HCT116 (cell line): ENCODE measurements at regions of chr16 and their contacts with region 1.

Region 1: GRCh38 chr16:20383106-20384029 is 21.2 kb downstream of the PDILT start:
- DNase-seq: peak; percentile 71
- ATAC-seq: peak; percentile 92
- H3K4me3 ChIP-seq: no peak overlapping the region
- H3K27ac ChIP-seq: no peak overlapping the region
- H3K4me1 ChIP-seq: no peaks in the 10 kb centered on the region
- H3K27me3 ChIP-seq: peaks cover under 1% of the 10 kb centered on the region; the same call in 1 of the 2 replicates
- CTCF ChIP-seq: peak; percentile 69 to 83 (median 76)
- POLR2A ChIP-seq: no peak
- RAD21 ChIP-seq: peak; percentile 81

Region 2: DNA sequence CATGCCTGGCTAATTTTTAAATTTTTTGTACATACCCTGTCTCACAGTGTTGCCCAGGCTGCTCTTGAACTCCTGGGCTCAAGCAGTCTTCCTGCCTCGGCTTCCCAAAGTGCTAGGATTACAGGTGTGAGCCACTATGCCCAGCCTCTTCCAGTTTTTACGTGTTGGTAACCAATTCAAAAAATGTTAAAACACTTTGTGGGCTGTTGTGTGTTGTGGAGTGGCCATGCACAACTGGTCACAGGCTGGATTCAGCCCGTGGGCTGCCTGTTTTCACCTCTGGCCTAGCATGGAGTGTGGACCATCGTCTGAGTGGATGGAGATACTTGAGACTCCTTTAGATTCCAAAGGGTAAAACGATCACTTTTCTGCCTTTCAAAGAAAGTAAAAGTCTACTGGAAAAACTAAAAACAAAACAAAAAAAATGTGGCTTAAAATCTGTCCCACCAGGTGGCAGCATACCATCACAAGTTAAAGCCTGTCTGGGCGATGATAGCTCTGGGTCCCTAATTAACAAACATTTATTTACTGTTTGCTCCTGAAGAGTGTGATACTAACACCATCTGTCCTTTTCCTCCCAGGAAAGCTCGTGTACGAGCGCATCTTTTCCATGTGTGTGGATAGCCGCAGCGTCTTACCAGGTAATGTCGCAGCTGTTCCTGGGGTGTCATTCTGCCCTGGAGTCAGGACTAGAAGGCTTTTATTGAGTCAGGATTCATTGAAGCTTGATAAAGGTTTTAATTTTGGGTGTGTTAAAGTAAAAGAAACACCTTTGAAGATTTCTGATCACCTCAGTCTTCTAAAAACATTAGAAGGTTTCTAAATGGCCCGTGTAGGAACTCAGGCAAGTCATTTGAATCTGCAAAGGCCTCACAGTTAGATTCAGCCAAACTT is 782.0 kb before region 1 on chr16:
- CTCF ChIA-PET with region 1: interaction called, 14 read pairs
- POLR2A ChIA-PET with region 1: no interaction called
- RAD21 ChIA-PET with region 1: interaction called in 1 of 2 experiments, 3 read pairs
- intact Hi-C with region 1: loop called (anchors 5 kb)
- DNase-seq: peak; percentile 36
- ATAC-seq: peak; percentile 67
- H3K4me3 ChIP-seq: no peak overlapping the region
- H3K27ac ChIP-seq: no peak overlapping the region
- H3K4me1 ChIP-seq: no peaks in the 10 kb centered on the region; a peak in 1 of 4 replicates
- H3K27me3 ChIP-seq: no peaks in the 10 kb centered on the region
- CTCF ChIP-seq: peak; percentile 56 to 86 (median 78); a peak in 5 of 6 replicates
- POLR2A ChIP-seq: no peak
- RAD21 ChIP-seq: peak; percentile 91

Region 3: GRCh38 chr16:19898924-19899604 is 484.3 kb before region 1 on chr16:
- CTCF ChIA-PET with region 1: interaction called, 49 read pairs
- POLR2A ChIA-PET with region 1: no interaction called
- RAD21 ChIA-PET with region 1: interaction called, 3 to 5 read pairs
- intact Hi-C with region 1: loop called (anchors 1 kb)
- DNase-seq: peak; percentile 57
- ATAC-seq: peak; percentile 89
- H3K4me3 ChIP-seq: no peak overlapping the region
- H3K27ac ChIP-seq: no peak overlapping the region
- H3K4me1 ChIP-seq: peaks cover 4 to 6% of the 10 kb centered on the region in 2 experiments; a peak in 2 of 4 replicates
- H3K27me3 ChIP-seq: no peaks in the 10 kb centered on the region
- CTCF ChIP-seq: peak; percentile 69 to 88 (median 83)
- POLR2A ChIP-seq: no peak
- RAD21 ChIP-seq: peak; percentile 75

Region 4: DNA sequence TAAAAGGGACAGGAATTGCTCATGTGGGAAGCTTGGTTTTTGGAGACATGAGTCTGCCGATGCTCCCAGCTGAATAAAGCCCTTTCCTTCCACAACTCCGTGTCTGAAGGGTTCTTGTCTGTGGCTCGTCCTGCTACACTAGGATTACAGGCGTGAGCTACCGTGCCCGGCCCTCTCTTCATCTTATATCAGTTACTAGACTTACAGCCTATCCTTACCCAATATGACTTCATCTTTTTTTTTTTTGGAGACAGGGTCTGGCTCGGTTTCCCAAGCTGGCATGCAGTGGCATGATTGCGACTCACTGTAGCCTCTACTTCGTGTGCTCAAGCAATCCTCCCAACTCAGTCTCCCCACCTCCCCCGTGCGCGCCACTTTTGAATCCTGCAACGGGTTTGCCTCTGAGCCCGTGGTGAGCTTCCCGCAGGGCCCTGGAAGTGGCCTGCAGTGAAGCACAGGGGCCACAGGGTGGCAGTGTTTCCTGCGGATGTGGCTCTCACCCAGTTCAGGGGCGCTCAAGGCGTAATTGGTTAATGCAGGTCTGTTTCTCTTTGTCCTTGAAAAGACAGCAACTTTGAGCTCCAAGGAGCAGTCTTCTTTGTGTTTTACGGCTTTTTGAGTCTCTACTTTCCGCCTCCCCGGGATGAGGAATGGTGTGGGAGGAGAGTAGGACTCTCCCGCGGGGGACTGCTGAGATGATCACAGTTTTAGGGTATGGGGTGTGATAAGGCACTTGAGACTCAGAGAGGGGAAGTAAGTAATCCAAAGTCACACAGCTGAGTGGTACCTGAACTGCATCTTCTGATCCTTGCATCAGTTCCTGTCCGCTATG is 476.0 kb before region 1 on chr16:
- CTCF ChIA-PET with region 1: interaction called, 124 read pairs
- POLR2A ChIA-PET with region 1: interaction called, 9 read pairs
- RAD21 ChIA-PET with region 1: interaction called, 11 to 15 read pairs
- intact Hi-C with region 1: loop called (anchors 1 kb)
- DNase-seq: peak; percentile 62
- ATAC-seq: peak; percentile 99
- H3K4me3 ChIP-seq: no peak overlapping the region
- H3K27ac ChIP-seq: no peak overlapping the region
- H3K4me1 ChIP-seq: peaks cover 0 to 8% of the 10 kb centered on the region in 2 experiments; a peak in 2 of 4 replicates
- H3K27me3 ChIP-seq: no peaks in the 10 kb centered on the region
- CTCF ChIP-seq: peak; percentile 95 to 99 (median 98)
- POLR2A ChIP-seq: no peak
- RAD21 ChIP-seq: peak; percentile 94

Region 5: GRCh38 chr16:20359997-20360396 is 23.4 kb before region 1 on chr16:
- CTCF ChIA-PET with region 1: interaction called, 9 read pairs
- POLR2A ChIA-PET with region 1: no interaction called
- RAD21 ChIA-PET with region 1: no interaction called
- intact Hi-C with region 1: loop called (anchors 1 kb)
- DNase-seq: no peak
- ATAC-seq: peak; percentile 72
- H3K4me3 ChIP-seq: no peak overlapping the region
- H3K27ac ChIP-seq: no peak overlapping the region
- H3K4me1 ChIP-seq: no peaks in the 10 kb centered on the region
- H3K27me3 ChIP-seq: peaks cover 56% of the 10 kb centered on the region
- CTCF ChIP-seq: peak; percentile 24 to 69 (median 59); a peak in 5 of 6 replicates
- POLR2A ChIP-seq: no peak
- RAD21 ChIP-seq: peak; percentile 35; the same call in 1 of the 2 replicates

Region 6: GRCh38 chr16:20393801-20394577 is 10.6 kb after region 1 on chr16:
- CTCF ChIA-PET with region 1: interaction called, 15 read pairs
- POLR2A ChIA-PET with region 1: no interaction called
- RAD21 ChIA-PET with region 1: no interaction called
- intact Hi-C with region 1: no loop called
- DNase-seq: no peak
- ATAC-seq: no peak
- H3K4me3 ChIP-seq: no peak overlapping the region
- H3K27ac ChIP-seq: no peak overlapping the region
- H3K4me1 ChIP-seq: no peaks in the 10 kb centered on the region
- H3K27me3 ChIP-seq: peaks cover 8% of the 10 kb centered on the region; the same call in 1 of the 2 replicates
- CTCF ChIP-seq: no peak
- POLR2A ChIP-seq: no peak
- RAD21 ChIP-seq: no peak

Region 7: GRCh38 chr16:22152316-22152715 is 1768.9 kb after region 1 on chr16:
- CTCF ChIA-PET with region 1: no interaction called
- POLR2A ChIA-PET with region 1: no interaction called
- RAD21 ChIA-PET with region 1: no interaction called
- intact Hi-C with region 1: no loop called
- DNase-seq: no peak
- ATAC-seq: no peak
- H3K4me3 ChIP-seq: no peak overlapping the region
- H3K27ac ChIP-seq: no peak overlapping the region
- H3K4me1 ChIP-seq: no peaks in the 10 kb centered on the region
- H3K27me3 ChIP-seq: no peaks in the 10 kb centered on the region
- CTCF ChIP-seq: no peak
- POLR2A ChIP-seq: no peak
- RAD21 ChIP-seq: no peak